A673 (cell line): ENCODE measurements at regions of chr7 and their contacts with region 1.

Region 1: DNA sequence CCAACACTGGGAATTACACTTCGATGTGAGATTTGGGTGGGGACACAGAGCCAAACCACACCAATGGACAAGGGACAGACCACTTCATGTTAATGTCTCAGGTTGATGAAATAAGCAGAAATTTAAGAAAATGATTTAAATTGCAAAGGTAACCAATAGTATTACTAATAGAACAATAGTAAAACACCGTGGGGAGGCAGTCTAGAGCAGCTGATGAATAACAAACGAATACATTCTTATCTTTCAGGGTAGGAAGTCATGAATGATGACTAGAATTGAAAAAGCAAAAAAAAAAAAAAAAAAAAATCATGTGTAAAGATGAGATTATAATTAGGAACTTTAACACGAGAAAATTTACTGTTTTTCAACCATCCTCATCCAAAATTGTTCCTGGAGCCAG is 171.9 kb upstream of the TEX47 start:
- DNase-seq: no peak
- H3K4me3 ChIP-seq: no peak overlapping the region
- H3K27ac ChIP-seq: no peak overlapping the region
- H3K4me1 ChIP-seq: no peaks in the 10 kb centered on the region
- H3K27me3 ChIP-seq: no peaks in the 10 kb centered on the region
- CTCF ChIP-seq: no peak

Region 2: GRCh38 chr7:88919478-88920131 is 47.8 kb before region 1 on chr7:
- CTCF ChIA-PET with region 1: no interaction called
- POLR2A ChIA-PET with region 1: no interaction called
- intact Hi-C with region 1: loop called (anchors 10 kb)
- DNase-seq: no peak
- H3K4me3 ChIP-seq: no peak overlapping the region
- H3K27ac ChIP-seq: no peak overlapping the region
- H3K4me1 ChIP-seq: no peaks in the 10 kb centered on the region
- H3K27me3 ChIP-seq: no peaks in the 10 kb centered on the region
- CTCF ChIP-seq: no peak

Region 3: DNA sequence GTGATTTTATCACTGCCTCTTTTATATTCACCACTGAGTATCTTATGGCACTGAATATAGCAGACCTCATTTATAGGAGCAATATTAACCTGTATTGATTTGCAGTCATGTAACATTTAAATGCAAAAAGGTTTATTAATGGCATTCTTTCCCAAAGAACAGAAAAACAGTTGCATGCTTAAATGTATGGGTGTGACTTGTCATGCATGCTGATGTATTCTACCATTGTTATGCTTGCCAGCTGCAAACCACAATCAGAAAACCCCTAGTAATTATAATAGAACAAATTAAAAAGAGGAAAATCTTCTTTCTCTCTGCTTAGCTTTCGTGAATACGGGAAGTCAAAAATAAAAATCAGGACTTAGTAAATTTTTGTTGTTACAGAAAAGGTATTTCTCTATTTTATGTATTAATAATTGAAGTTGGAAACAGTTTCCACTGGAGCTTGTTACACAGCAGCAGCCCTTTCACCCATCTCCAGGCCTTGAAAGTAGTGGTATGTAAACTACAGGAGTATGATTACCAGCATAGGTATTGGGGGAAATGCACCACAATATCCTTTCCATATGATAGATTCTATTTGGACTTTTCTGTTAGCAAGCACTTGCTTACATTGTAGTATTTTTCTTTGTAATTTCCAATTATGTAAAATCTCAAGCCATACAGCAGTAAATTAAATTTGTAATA is 24.5 kb before region 1 on chr7:
- CTCF ChIA-PET with region 1: no interaction called
- POLR2A ChIA-PET with region 1: no interaction called
- intact Hi-C with region 1: no loop called
- DNase-seq: no peak
- H3K4me3 ChIP-seq: no peak overlapping the region
- H3K27ac ChIP-seq: no peak overlapping the region
- H3K4me1 ChIP-seq: no peaks in the 10 kb centered on the region
- H3K27me3 ChIP-seq: no peaks in the 10 kb centered on the region
- CTCF ChIP-seq: no peak